Endothelial cell of umbilical vein (primary cell): ENCODE measurements at regions of chr9 and their contacts with region 1.

Region 1: GRCh38 chr9:132575005-132575609 is 7.3 kb upstream of the BARHL1 start:
- DNase-seq: peak; percentile 58
- H3K4me3 ChIP-seq: no peak overlapping the region
- H3K27ac ChIP-seq: no peak overlapping the region
- H3K4me1 ChIP-seq: no peaks in the 10 kb centered on the region
- H3K27me3 ChIP-seq: peaks cover 37 to 40% of the 10 kb centered on the region in 2 experiments
- CTCF ChIP-seq: peak; percentile 62 to 89
- POLR2A ChIP-seq: no peak

Region 2: DNA sequence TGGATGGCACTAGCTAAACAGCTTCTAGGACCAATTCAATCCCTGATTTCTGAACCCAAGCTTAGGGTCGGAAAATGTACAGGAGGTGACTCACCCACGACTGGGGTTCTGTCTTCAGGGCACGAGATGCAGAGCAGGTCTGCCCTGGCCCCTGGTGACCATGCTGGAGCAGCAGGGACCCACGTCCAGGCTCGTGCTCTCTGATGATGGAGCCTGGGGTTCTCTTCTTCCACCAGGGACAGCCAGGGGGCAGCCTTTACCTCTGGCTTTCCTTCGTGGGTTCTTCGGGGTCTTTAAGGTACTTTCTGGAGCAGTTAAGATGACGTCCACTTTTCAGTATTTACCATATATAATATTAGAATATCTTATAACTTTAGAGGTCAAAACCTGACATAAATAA is 163.0 kb before region 1 on chr9:
- CTCF ChIA-PET with region 1: interaction called, 32 read pairs
- POLR2A ChIA-PET with region 1: no interaction called
- dilution Hi-C with region 1: no loop called
- intact Hi-C with region 1: loop called (anchors 1 kb)
- DNase-seq: peak; percentile 14
- H3K4me3 ChIP-seq: no peak overlapping the region
- H3K27ac ChIP-seq: no peak overlapping the region
- H3K4me1 ChIP-seq: peaks cover 8% of the 10 kb centered on the region
- H3K27me3 ChIP-seq: peaks cover 29 to 46% of the 10 kb centered on the region in 2 experiments
- CTCF ChIP-seq: peak; percentile 55 to 61
- POLR2A ChIP-seq: no peak

Region 3: DNA sequence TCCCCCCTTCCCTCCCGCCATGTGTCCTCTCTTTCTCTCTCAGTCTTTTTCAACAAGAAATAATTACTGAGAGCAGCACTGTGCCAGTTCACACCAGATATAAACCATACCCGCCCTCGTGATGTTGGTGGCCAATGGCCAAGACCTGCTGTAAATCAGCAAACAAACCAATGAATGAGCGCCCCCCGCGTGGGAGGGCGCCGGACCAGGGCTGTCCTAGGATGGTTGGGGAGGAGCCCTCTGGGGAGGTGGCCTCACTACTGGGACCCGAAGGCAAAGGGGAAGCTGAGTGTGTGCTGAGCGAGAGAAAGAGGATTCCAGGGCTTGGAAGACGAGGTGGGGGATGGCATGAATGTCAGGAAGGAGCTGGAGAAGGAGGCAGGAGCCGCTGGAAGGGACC is 43.9 kb before region 1 on chr9:
- CTCF ChIA-PET with region 1: no interaction called
- POLR2A ChIA-PET with region 1: no interaction called
- dilution Hi-C with region 1: no loop called
- intact Hi-C with region 1: no loop called
- DNase-seq: no peak
- H3K4me3 ChIP-seq: no peak overlapping the region
- H3K27ac ChIP-seq: no peak overlapping the region
- H3K4me1 ChIP-seq: no peaks in the 10 kb centered on the region
- H3K27me3 ChIP-seq: no peaks in the 10 kb centered on the region
- CTCF ChIP-seq: no peak
- POLR2A ChIP-seq: no peak

Region 4: GRCh38 chr9:132546148-132547051 is 28.7 kb before region 1 on chr9:
- CTCF ChIA-PET with region 1: interaction called, 5 read pairs
- POLR2A ChIA-PET with region 1: no interaction called
- dilution Hi-C with region 1: no loop called
- intact Hi-C with region 1: loop called (anchors 1 kb)
- DNase-seq: peak; percentile 32
- H3K4me3 ChIP-seq: peak overlapping the region in 1 of 3 experiments; percentile 9
- H3K27ac ChIP-seq: no peak overlapping the region
- H3K4me1 ChIP-seq: peaks cover 14% of the 10 kb centered on the region
- H3K27me3 ChIP-seq: peaks cover 0 to 3% of the 10 kb centered on the region in 2 experiments
- CTCF ChIP-seq: peak; percentile 44 to 64
- POLR2A ChIP-seq: no peak